ENCODE measurements at regions of chr22 and their contacts with region 1.

Region 1: DNA sequence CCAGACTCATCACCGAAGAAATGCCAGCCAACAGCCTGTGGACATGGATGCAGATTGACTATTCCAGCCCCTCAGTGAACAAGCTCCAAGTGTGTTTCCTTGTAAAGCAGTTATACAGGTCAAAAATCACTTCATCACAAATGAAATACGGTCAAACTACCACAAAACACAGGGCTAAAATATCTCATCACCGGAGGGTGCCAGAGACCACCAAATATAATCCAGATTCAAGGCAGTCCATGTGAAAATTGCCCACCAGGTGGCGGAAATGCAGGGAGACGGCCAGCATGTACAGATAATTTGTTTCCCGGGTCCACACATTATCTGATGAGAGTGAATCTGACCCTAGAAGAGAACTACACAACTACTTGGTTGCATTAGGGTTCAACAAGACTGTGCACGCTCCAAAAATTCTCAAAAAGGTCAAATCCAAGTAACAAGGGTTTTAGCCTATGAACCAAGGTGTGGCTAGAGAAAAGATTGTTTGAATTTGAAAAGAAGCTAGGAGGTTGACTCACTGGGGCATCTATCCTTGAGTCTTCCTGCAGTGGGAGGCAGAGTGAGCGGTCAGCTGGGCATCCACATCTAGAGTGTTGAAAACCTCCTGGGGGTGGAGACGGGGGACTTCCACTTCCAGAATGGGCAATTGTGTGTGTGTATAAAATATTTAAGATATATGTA is 71.7 kb downstream of the IGLL5 start:
- DNase-seq: no peak
- ATAC-seq: peak; percentile 63
- H3K4me3 Mint-ChIP-seq: no peak overlapping the region
- H3K27ac Mint-ChIP-seq: no peak overlapping the region
- H3K4me1 Mint-ChIP-seq: peaks cover 15% of the 10 kb centered on the region
- H3K27me3 Mint-ChIP-seq: no peaks in the 10 kb centered on the region
- CTCF ChIP-seq: peak; percentile 94

Region 2: DNA sequence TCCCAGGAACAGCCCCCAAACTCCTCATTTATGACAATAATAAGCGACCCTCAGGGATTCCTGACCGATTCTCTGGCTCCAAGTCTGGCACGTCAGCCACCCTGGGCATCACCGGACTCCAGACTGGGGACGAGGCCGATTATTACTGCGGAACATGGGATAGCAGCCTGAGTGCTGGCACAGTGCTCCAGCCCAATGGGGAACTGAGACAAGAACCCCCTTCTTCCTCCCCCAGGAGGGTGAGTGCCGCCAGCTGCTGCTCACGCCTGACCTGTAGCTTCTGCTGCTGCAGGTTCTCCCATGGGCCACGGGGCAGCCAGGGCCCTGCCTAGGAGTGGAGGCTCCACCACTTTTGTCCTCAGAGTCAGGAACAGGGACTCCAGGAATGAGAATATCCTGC is 636.5 kb before region 1 on chr22:
- CTCF ChIA-PET with region 1: interaction called, 4 read pairs
- POLR2A ChIA-PET with region 1: no interaction called
- intact Hi-C with region 1: loop called (anchors 1 kb)
- DNase-seq: no peak
- ATAC-seq: peak; percentile 11
- H3K4me3 Mint-ChIP-seq: peak overlapping the region; percentile 15
- H3K27ac Mint-ChIP-seq: no peak overlapping the region
- H3K4me1 Mint-ChIP-seq: peaks cover 43% of the 10 kb centered on the region
- H3K27me3 Mint-ChIP-seq: no peaks in the 10 kb centered on the region
- CTCF ChIP-seq: no peak

Region 3: GRCh38 chr22:22593964-22594656 is 365.2 kb before region 1 on chr22:
- CTCF ChIA-PET with region 1: interaction called, 9 read pairs
- POLR2A ChIA-PET with region 1: no interaction called
- intact Hi-C with region 1: loop called (anchors 1 kb)
- DNase-seq: peak; percentile 53
- ATAC-seq: peak; percentile 90
- H3K4me3 Mint-ChIP-seq: no peak overlapping the region
- H3K27ac Mint-ChIP-seq: peak overlapping the region; percentile 46
- H3K4me1 Mint-ChIP-seq: peaks cover 27% of the 10 kb centered on the region
- H3K27me3 Mint-ChIP-seq: no peaks in the 10 kb centered on the region
- CTCF ChIP-seq: no peak

Region 4: DNA sequence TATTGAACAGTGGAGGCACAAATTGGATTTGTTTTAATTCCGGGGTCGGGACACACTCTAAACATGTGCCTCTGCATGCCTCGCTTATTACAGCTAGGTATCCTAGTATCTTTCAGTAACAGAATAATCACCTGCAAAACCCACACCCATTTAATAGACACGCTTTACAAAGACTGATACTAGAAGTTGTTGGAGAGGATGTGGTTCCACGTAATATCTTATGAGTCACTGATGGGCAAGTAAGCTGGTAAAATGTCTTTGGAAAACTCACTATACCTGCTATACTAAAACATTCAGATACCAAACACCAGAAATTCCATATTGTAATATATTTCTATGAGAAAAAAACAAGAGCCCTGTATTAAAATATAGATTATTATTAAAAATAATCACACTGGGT is 230.9 kb before region 1 on chr22:
- CTCF ChIA-PET with region 1: no interaction called
- POLR2A ChIA-PET with region 1: no interaction called
- intact Hi-C with region 1: no loop called
- DNase-seq: no peak
- ATAC-seq: no peak
- H3K4me3 Mint-ChIP-seq: no peak overlapping the region
- H3K27ac Mint-ChIP-seq: no peak overlapping the region
- H3K4me1 Mint-ChIP-seq: peaks cover 6% of the 10 kb centered on the region
- H3K27me3 Mint-ChIP-seq: no peaks in the 10 kb centered on the region
- CTCF ChIP-seq: no peak

Region 5: GRCh38 chr22:22748297-22748743 is 211.0 kb before region 1 on chr22:
- CTCF ChIA-PET with region 1: interaction called, 77 read pairs
- POLR2A ChIA-PET with region 1: interaction called, 5 read pairs
- intact Hi-C with region 1: loop called (anchors 1 kb)
- DNase-seq: no peak
- ATAC-seq: peak; percentile 35
- H3K4me3 Mint-ChIP-seq: no peak overlapping the region
- H3K27ac Mint-ChIP-seq: peak overlapping the region; percentile 18
- H3K4me1 Mint-ChIP-seq: peaks cover 48% of the 10 kb centered on the region
- H3K27me3 Mint-ChIP-seq: no peaks in the 10 kb centered on the region
- CTCF ChIP-seq: peak; percentile 24

Region 6: DNA sequence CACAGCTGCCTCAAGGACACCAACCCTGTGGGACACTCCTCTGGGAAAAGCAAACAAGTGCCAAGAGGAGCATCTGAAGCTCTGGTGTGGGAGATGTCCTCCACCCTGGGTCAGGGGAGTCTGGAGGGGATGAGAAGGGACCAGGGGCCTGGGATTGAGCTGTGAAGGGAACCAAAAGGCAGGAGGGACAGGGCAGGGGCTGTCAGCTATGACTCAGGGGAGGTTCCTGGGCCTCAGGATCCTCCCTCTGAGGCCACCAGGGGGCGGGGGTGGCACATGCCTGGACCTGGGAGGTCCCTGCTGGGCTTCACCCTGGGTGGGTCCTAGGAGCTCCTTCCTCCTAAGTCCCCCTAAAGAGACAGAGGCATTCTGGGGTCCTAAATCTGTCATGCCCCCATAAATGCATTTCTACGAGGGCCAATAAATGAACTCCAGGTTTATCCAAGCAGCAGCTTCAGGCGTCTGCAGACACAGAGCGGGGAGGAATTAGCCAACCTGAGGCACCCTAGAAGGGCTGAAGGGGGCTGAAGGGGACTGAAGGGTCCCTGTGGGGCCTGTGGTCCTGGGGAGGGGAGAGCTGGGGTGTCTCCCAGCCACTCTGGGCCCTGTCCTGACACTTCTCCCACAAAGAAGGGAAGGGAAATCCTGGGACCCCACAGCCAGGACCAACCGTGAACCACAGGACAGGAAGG is 103.5 kb before region 1 on chr22:
- CTCF ChIA-PET with region 1: interaction called, 182 read pairs
- POLR2A ChIA-PET with region 1: interaction called, 6 read pairs
- intact Hi-C with region 1: no loop called
- DNase-seq: peak; percentile 53
- ATAC-seq: peak; percentile 79
- H3K4me3 Mint-ChIP-seq: no peak overlapping the region
- H3K27ac Mint-ChIP-seq: peak overlapping the region; percentile 4
- H3K4me1 Mint-ChIP-seq: peaks cover 35% of the 10 kb centered on the region
- H3K27me3 Mint-ChIP-seq: peaks cover 10% of the 10 kb centered on the region
- CTCF ChIP-seq: no peak

Region 7: DNA sequence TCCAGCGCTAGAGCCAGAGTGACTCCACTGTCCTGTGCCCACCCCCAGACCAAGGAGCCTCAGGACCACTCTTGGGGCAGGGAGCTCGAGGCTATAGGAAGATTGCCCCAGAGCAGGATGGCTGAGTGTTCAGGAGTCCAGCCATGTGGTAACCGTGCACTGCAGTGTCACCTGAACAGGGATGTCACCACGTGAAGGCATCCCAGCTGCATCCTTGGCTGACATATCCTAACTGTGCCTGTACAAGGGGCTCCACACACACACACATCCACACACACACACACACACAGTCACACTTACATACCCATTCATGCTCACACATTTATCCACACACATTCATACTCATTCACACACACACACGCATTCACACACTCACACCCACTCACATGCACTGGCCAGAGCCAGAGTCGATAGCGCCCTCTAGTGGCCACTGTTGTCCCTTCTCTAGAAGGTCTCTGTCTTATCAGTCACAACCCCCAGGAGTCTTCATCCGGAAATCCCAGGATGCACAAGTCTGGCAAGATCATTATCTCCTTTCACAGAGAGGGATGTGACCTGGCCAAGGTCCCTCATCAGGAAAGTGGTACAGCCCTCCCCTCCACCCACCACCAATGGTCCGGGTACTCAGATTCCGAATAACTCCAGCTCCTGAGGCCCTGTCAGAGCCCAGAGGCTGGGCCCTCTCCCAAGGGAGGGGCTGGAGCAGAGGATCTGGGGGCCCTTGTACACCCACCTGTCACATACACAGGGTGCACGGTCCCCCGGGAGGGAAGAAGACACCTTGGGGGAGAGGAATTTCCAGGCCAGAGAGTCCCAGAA is 16.6 kb before region 1 on chr22:
- CTCF ChIA-PET with region 1: interaction called, 75 read pairs
- POLR2A ChIA-PET with region 1: interaction called, 33 read pairs
- intact Hi-C with region 1: loop called (anchors 1 kb)
- DNase-seq: peak; percentile 62
- ATAC-seq: peak; percentile 75
- H3K4me3 Mint-ChIP-seq: peak overlapping the region; percentile 29
- H3K27ac Mint-ChIP-seq: peak overlapping the region; percentile 85
- H3K4me1 Mint-ChIP-seq: peaks cover 90% of the 10 kb centered on the region
- H3K27me3 Mint-ChIP-seq: no peaks in the 10 kb centered on the region
- CTCF ChIP-seq: peak; percentile 27

Region 8: GRCh38 chr22:23012081-23012622 is 52.9 kb after region 1 on chr22:
- CTCF ChIA-PET with region 1: no interaction called
- POLR2A ChIA-PET with region 1: no interaction called
- intact Hi-C with region 1: no loop called
- DNase-seq: no peak
- ATAC-seq: no peak
- H3K4me3 Mint-ChIP-seq: no peak overlapping the region
- H3K27ac Mint-ChIP-seq: no peak overlapping the region
- H3K4me1 Mint-ChIP-seq: no peaks in the 10 kb centered on the region
- H3K27me3 Mint-ChIP-seq: no peaks in the 10 kb centered on the region
- CTCF ChIP-seq: no peak

Region 9: DNA sequence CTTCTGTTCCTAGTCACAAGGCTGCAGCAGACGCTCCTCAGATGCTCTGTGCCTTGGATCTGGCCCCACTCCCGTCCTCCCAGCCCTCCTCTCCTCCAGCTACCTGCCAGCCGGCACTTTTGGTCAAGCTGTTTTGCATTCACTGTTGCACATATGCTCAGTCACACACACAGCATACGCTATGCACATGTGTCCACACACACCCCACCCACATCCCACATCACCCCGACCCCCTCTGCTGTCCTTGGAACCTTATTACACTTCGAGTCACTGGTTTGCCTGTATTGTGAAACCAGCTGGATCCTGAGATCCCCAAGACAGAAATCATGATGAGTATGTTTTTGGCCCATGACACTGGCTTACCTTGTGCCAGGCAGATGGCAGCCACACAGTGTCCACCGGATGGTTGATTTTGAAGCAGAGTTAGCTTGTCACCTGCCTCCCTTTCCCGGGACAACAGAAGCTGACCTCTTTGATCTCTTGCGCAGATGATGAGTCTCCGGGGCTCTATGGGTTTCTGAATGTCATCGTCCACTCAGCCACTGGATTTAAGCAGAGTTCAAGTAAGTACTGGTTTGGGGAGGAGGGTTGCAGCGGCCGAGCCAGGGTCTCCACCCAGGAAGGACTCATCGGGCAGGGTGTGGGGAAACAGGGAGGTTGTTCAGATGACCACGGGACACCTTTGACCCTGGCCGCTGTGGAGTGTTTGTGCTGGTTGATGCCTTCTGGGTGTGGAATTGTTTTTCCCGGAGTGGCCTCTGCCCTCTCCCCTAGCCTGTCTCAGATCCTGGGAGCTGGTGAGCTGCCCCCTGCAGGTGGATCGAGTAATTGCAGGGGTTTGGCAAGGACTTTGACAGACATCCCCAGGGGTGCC is 330.8 kb after region 1 on chr22:
- CTCF ChIA-PET with region 1: interaction called, 17 read pairs
- POLR2A ChIA-PET with region 1: no interaction called
- intact Hi-C with region 1: loop called (anchors 1 kb)
- DNase-seq: peak; percentile 39
- ATAC-seq: peak; percentile 61
- H3K4me3 Mint-ChIP-seq: no peak overlapping the region
- H3K27ac Mint-ChIP-seq: no peak overlapping the region
- H3K4me1 Mint-ChIP-seq: no peaks in the 10 kb centered on the region
- H3K27me3 Mint-ChIP-seq: no peaks in the 10 kb centered on the region
- CTCF ChIP-seq: peak; percentile 34

Measured in activated B cell treated with CpG ODN at 0.5 μM for 24 hours (primary cell).